ENCODE measurements at regions of chr20 and their contacts with region 1.

Region 1: DNA sequence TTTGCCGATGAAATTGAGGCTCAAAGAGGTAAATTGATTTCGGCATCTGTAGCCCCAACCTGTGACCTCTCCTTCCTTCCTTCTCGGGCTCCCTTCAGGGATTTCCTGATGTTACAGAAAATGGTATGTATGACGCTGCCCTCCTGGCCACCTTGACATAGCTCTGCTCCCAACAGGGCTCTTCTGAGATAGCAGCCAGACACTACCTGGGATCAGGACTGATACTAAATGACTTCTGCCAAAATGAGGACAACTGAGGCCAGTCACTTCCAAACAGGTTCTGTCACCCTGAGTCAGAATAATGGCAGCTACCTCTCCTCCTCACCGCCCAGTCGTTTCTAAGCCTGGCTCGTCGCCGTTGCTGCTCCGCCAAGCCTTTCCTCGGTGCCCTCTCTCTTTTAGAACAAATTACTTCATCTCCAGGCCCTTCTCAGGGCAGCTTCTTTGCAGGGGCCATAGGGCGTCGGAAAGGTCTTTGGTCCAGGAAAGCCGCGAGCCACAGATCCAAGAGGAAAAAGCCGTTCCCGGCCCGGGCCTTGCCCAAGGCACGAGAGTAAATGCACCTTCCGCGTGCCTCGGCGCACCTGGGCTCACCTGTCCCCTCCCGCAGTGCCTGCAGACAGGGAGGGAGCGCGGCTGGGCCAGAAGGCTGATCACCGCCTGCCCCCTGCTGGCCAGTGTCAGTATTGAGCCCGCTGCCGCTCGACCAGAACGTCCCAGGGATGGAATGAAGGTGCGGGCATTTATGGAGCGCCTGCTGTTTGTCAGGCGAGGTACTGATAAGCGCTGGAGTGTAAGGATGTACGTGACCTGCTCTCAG is 904 bp upstream of the LPIN3 start:
- DNase-seq: peak; percentile 71 to 92 (median 86)
- ATAC-seq: peak; percentile 99
- H3K4me3 ChIP-seq: peak overlapping the region; percentile 15 to 25
- H3K4me3 Mint-ChIP-seq: peak overlapping the region; percentile 58
- H3K27ac ChIP-seq: no peak overlapping the region
- H3K27ac Mint-ChIP-seq: no peak overlapping the region
- H3K4me1 ChIP-seq: peaks cover 9% of the 10 kb centered on the region
- H3K4me1 Mint-ChIP-seq: peaks cover 9% of the 10 kb centered on the region
- H3K27me3 ChIP-seq: peaks cover 0 to 3% of the 10 kb centered on the region in 2 experiments
- H3K27me3 Mint-ChIP-seq: peaks cover 8% of the 10 kb centered on the region
- CTCF ChIP-seq: peak; percentile 99

Region 2: DNA sequence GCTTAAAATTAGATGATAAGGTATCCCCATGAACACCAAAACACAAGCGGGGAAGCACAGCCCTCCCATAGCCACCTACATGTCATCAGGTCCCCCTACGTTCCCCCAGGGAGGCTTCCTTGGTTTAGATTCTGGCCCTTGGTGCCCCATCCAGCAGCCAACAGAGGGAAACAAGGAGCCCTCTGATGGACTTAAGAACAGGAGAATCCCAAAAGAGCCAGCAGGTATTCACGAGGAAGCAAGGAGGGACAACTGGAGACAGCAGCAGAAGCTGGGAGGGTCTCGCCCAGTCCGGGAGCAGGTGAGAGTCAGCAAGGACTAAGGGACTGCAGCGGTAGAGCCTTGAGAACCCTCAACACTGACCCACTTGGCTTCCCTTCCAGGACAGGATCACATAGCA is 369.5 kb before region 1 on chr20:
- CTCF ChIA-PET with region 1: interaction called, 43 read pairs
- POLR2A ChIA-PET with region 1: no interaction called
- intact Hi-C with region 1: loop called (anchors 1 kb)
- DNase-seq: peak in 1 of 9 experiments; percentile 44
- ATAC-seq: no peak
- H3K4me3 ChIP-seq: no peak overlapping the region
- H3K4me3 Mint-ChIP-seq: no peak overlapping the region
- H3K27ac ChIP-seq: no peak overlapping the region
- H3K27ac Mint-ChIP-seq: no peak overlapping the region
- H3K4me1 ChIP-seq: no peaks in the 10 kb centered on the region
- H3K4me1 Mint-ChIP-seq: peaks cover 7% of the 10 kb centered on the region
- H3K27me3 ChIP-seq: no peaks in the 10 kb centered on the region
- H3K27me3 Mint-ChIP-seq: peaks cover 3% of the 10 kb centered on the region
- CTCF ChIP-seq: no peak

Region 3: DNA sequence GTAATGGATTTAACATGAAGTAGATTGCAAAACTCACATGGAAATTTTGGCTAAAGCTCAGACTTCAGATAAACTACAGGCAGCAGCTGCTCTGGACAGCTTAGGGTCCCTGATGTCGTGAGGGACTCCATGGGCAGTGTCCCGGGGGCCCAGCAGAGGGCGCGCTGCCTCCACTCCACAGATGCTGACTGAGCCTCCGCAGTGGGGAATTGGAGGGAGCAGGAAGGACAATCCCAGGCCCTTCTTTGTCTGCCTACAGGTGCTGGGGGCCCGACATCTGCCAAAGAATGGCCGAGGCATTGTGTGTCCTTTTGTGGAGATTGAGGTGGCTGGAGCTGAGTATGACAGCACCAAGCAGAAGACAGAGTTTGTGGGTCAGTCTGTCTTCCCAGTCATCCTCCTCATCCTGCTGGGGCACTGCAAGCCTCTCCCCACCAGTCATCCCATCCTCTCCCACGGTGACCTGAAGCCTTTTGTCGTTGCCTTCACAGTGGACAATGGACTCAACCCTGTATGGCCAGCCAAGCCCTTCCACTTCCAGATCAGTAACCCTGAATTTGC is 166.5 kb before region 1 on chr20:
- CTCF ChIA-PET with region 1: interaction called, 58 read pairs
- POLR2A ChIA-PET with region 1: no interaction called
- intact Hi-C with region 1: loop called (anchors 1 kb)
- DNase-seq: peak; percentile 22 to 83 (median 71)
- ATAC-seq: peak; percentile 93
- H3K4me3 ChIP-seq: no peak overlapping the region
- H3K4me3 Mint-ChIP-seq: no peak overlapping the region
- H3K27ac ChIP-seq: peak overlapping the region in 1 of 2 experiments; percentile 29
- H3K27ac Mint-ChIP-seq: peak overlapping the region; percentile 81
- H3K4me1 ChIP-seq: peaks cover 21% of the 10 kb centered on the region
- H3K4me1 Mint-ChIP-seq: peaks cover 43% of the 10 kb centered on the region
- H3K27me3 ChIP-seq: no peaks in the 10 kb centered on the region
- H3K27me3 Mint-ChIP-seq: no peaks in the 10 kb centered on the region
- CTCF ChIP-seq: peak; percentile 74

Region 4: GRCh38 chr20:41232973-41233926 is 106.5 kb before region 1 on chr20:
- CTCF ChIA-PET with region 1: interaction called, 8 read pairs
- POLR2A ChIA-PET with region 1: no interaction called
- intact Hi-C with region 1: loop called (anchors 1 to 2 kb)
- DNase-seq: peak in 1 of 9 experiments; percentile 6
- ATAC-seq: no peak
- H3K4me3 ChIP-seq: no peak overlapping the region
- H3K4me3 Mint-ChIP-seq: no peak overlapping the region
- H3K27ac ChIP-seq: no peak overlapping the region
- H3K27ac Mint-ChIP-seq: no peak overlapping the region
- H3K4me1 ChIP-seq: peaks cover 12% of the 10 kb centered on the region
- H3K4me1 Mint-ChIP-seq: peaks cover 23% of the 10 kb centered on the region
- H3K27me3 ChIP-seq: no peaks in the 10 kb centered on the region
- H3K27me3 Mint-ChIP-seq: no peaks in the 10 kb centered on the region
- CTCF ChIP-seq: no peak

Region 5: DNA sequence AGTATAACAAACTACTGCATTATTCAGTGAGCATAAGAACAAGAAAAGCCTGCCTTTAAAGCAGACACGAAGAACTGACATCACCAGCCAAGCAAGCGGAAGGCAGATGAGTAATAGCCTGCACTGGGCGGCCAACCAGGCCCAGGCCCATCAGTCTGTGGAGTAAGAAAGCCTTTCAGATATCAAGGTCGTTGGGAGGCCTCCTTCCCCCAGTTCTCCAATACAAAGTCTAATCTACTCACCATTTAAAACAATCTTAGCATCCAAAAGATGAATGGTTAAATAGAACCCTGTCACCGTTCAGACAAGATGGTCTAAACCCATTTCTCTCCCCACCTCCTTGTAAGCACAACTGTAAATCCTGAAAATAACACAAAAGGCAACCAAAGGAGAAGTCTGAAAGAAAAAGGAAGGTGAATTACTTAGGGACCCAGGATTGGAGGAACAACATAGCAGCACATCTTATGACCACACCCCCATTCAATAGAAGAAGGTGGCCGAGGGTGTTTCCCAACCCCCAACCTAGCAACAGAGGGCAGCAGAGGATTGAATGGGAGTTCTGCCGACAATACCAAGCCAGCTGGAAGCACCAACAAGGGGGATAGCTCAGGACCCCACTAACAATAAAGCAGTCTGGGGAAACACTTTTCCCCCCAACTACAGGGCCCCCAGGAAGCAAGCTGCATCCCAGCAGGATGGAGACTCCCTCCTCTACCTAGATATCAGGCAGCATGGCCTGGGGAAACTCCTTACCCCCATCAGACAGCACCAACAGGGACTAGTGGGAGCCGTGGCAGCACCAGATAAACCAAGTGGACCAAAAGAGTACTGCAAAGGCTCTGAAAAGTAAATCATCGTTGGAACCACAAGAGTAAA is 90.1 kb before region 1 on chr20:
- CTCF ChIA-PET with region 1: interaction called, 11 read pairs
- POLR2A ChIA-PET with region 1: no interaction called
- intact Hi-C with region 1: no loop called
- DNase-seq: peak in 1 of 9 experiments; percentile 12
- ATAC-seq: no peak
- H3K4me3 ChIP-seq: no peak overlapping the region
- H3K4me3 Mint-ChIP-seq: no peak overlapping the region
- H3K27ac ChIP-seq: no peak overlapping the region
- H3K27ac Mint-ChIP-seq: no peak overlapping the region
- H3K4me1 ChIP-seq: no peaks in the 10 kb centered on the region
- H3K4me1 Mint-ChIP-seq: no peaks in the 10 kb centered on the region
- H3K27me3 ChIP-seq: no peaks in the 10 kb centered on the region
- H3K27me3 Mint-ChIP-seq: no peaks in the 10 kb centered on the region
- CTCF ChIP-seq: no peak

Region 6: DNA sequence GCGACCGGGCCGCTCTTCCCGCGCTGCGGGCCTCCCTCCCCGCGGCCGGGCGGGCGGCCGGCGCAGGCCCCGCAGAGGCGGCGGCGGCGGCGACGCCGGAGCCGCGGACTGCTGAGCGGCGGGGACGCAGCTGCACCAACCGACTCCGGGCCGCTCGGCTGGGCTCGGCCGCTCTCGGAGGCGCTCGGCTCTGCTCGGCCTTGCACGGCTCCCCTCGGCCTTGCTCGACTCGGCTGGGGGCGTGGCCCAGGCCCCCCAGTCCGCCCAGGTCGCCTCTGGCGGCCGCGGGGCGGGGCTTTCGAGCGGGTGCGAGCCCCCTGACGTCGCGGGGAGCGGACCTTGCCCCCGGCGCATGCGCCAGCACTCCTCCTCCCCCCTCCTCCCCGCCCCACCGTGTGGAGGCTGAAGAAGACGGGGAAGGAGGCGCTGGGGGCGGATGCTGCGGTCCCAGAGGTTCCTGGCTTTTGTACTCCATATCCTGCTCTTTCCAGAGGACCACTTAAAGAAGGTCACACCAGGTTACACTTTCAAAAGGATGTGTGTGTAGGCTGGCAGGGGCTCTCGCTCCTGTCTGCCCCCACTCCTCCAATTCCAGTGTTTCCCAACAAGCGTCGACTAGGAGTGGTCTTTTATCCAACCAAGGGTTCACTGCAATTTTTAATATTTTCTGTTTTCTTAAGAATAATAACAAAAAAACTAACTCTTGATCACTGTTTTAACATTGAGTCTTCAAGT is 22.0 kb before region 1 on chr20 and contains the start of gene ZHX3:
- CTCF ChIA-PET with region 1: interaction called, 3 read pairs
- POLR2A ChIA-PET with region 1: no interaction called
- intact Hi-C with region 1: loop called (anchors 1 to 2 kb)
- DNase-seq: peak; percentile 93 to 99 (median 97)
- ATAC-seq: peak; percentile 95
- H3K4me3 ChIP-seq: peak within 1 kb of the TSS; percentile 67 to 85
- H3K4me3 Mint-ChIP-seq: peak within 1 kb of the TSS; percentile 80
- H3K27ac ChIP-seq: peak within 1 kb of the TSS; percentile 47 to 57
- H3K27ac Mint-ChIP-seq: peak within 1 kb of the TSS; percentile 57
- H3K4me1 ChIP-seq: peaks cover 11% of the 10 kb centered on the region
- H3K4me1 Mint-ChIP-seq: peaks cover 28% of the 10 kb centered on the region
- H3K27me3 ChIP-seq: no peaks in the 10 kb centered on the region
- H3K27me3 Mint-ChIP-seq: no peaks in the 10 kb centered on the region
- CTCF ChIP-seq: no peak
- total RNA-seq, gene ZHX3: 4.4 to 4.7 TPM

Region 7: DNA sequence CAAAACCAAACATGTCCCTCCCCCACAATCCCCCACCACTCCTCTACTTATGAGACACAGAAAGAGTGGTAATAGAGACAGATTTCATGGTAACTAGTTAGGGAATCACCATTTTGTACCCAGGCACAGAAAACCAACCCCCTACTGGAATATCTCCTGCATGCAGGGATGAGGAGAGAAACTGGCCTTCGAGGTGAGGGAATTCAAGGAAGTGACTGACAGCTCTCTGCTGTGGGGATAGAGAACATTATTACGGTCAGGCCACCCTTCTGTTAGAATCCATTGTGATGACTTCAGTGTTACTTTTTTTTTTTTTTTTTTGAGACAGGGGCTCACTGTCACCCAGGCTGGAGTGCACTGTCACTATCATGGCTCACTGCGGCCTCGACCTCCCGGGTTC is 12.6 kb before region 1 on chr20:
- CTCF ChIA-PET with region 1: interaction called, 14 read pairs
- POLR2A ChIA-PET with region 1: interaction called, 3 read pairs
- intact Hi-C with region 1: no loop called
- DNase-seq: no peak
- ATAC-seq: no peak
- H3K4me3 ChIP-seq: no peak overlapping the region
- H3K4me3 Mint-ChIP-seq: no peak overlapping the region
- H3K27ac ChIP-seq: no peak overlapping the region
- H3K27ac Mint-ChIP-seq: no peak overlapping the region
- H3K4me1 ChIP-seq: peaks cover 11% of the 10 kb centered on the region
- H3K4me1 Mint-ChIP-seq: peaks cover 15% of the 10 kb centered on the region
- H3K27me3 ChIP-seq: no peaks in the 10 kb centered on the region
- H3K27me3 Mint-ChIP-seq: no peaks in the 10 kb centered on the region
- CTCF ChIP-seq: no peak